ENCODE measurements at regions of chr4 and their contacts with region 1.

Region 1: GRCh38 chr4:173529477-173530325 is at the start of gene HAND2:
- DNase-seq: peak; percentile 90
- total RNA-seq, gene HAND2: 161 TPM

Region 2: DNA sequence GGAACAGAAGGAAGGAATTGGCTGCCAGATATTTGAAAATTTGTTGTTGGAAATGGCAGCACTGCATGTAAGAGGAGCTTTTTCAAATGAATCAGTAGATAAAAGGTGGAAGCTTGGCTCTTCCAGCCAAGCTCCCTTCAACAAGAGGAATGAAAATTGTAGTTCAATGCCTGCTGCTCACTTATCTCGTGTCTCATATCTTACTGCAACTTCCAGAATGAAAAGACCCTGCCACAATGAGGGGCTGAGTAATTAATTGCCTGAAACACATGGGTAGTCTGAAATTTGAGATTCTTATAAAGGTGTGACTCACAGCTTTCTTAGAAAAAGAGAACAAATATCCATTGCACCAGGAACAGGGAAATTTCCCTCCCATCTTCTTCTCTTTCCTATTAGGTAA is 52.7 kb before region 1 on chr4:
- intact Hi-C with region 1: no loop called
- DNase-seq: no peak

Region 3: DNA sequence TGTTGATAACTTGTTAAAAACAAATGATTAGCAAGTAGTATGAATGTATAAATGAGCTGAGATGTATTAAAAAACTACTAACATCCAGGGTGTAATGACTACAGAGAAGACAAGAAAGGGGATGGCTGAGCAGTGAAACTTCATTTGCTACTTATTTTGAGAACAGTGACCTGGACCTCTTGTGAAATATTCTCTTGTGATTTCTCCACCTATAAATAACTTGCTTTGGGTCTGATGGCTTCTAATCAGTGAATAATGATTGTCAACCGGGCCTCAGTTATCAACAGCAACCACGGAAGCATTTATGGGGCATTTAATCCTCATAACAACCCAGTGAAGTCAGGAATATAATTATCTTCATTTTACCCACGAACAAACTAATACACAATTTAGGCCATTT is 154.5 kb after region 1 on chr4:
- intact Hi-C with region 1: loop called (anchors 5 kb)
- DNase-seq: no peak